Caco-2 (cell line): ENCODE measurements at regions of chr5 and their contacts with region 1.

Region 1: DNA sequence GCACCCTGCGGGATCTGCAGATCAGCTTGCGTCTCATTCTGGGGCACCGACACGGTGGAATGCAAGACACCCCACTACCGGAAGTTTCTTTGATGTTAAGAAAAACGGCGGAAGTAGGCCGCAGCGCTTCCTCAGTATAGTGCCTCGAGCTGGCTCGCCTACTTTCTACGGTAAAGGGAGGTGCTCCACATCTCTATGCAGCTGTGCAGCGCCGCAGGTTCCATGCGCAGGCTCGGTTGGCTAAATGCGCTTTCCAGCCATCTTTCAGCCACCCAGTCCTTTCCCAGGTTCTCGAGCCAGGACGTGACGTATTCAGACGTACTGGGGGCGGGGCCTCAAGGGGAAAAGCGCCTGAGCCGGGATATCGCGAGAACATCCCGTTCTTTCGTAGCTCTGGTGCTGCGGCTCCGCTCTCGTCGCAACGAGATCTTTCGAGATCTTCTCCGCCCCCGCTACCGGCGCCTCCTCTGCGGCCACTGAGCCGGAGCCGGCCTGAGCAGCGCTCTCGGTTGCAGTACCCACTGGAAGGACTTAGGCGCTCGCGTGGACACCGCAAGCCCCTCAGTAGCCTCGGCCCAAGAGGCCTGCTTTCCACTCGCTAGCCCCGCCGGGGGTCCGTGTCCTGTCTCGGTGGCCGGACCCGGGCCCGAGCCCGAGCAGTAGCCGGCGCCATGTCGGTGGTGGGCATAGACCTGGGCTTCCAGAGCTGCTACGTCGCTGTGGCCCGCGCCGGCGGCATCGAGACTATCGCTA is at the start of gene HSPA4:
- DNase-seq: peak; percentile 98 to 99
- H3K4me3 ChIP-seq: peak within 1 kb of the TSS; percentile 93
- H3K4me3 Mint-ChIP-seq: peak within 1 kb of the TSS; percentile 96
- H3K27ac Mint-ChIP-seq: peak within 1 kb of the TSS; percentile 100
- H3K4me1 ChIP-seq: peaks cover 24% of the 10 kb centered on the region
- H3K4me1 Mint-ChIP-seq: peaks cover 30% of the 10 kb centered on the region
- H3K27me3 ChIP-seq: no peaks in the 10 kb centered on the region
- H3K27me3 Mint-ChIP-seq: no peaks in the 10 kb centered on the region
- CTCF ChIP-seq: no peak
- total RNA-seq, gene HSPA4: 237 and 249 TPM in 2 replicates

Region 2: DNA sequence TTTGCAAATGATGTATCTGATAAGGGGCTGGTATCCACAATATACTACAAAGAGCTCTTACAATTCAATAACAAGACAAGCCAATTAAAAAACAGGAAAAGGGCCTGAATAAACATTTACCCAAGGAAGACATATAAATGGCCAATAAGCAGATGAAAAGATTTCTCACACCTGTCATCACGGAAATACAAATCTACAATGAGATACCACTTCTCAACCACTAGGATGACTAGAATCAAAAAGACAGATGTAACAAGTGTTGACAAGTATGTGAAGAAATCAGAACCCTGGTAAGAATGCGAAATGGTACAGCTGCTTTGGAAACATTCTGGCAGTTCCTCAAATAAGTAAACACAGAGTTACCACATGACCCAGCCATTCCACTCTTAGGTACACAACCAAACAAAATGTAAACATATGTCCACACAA is 145.9 kb before region 1 on chr5:
- CTCF ChIA-PET with region 1: no interaction called
- POLR2A ChIA-PET with region 1: no interaction called
- intact Hi-C with region 1: loop called (anchors 10 kb)
- DNase-seq: peak in 1 of 2 experiments; percentile 35
- H3K4me3 ChIP-seq: no peak overlapping the region
- H3K4me3 Mint-ChIP-seq: no peak overlapping the region
- H3K27ac Mint-ChIP-seq: no peak overlapping the region
- H3K4me1 ChIP-seq: no peaks in the 10 kb centered on the region
- H3K4me1 Mint-ChIP-seq: no peaks in the 10 kb centered on the region
- H3K27me3 ChIP-seq: no peaks in the 10 kb centered on the region
- H3K27me3 Mint-ChIP-seq: no peaks in the 10 kb centered on the region
- CTCF ChIP-seq: peak in 1 of 2 experiments; percentile 31

Region 3: GRCh38 chr5:132949136-132949535 is 102.6 kb before region 1 on chr5:
- CTCF ChIA-PET with region 1: no interaction called
- POLR2A ChIA-PET with region 1: interaction called, 10 read pairs
- intact Hi-C with region 1: no loop called
- DNase-seq: no peak
- H3K4me3 ChIP-seq: no peak overlapping the region
- H3K4me3 Mint-ChIP-seq: no peak overlapping the region
- H3K27ac Mint-ChIP-seq: no peak overlapping the region
- H3K4me1 ChIP-seq: peaks cover 25% of the 10 kb centered on the region
- H3K4me1 Mint-ChIP-seq: peaks cover 20% of the 10 kb centered on the region
- H3K27me3 ChIP-seq: no peaks in the 10 kb centered on the region
- H3K27me3 Mint-ChIP-seq: no peaks in the 10 kb centered on the region
- CTCF ChIP-seq: no peak

Region 4: GRCh38 chr5:132963175-132964104 is 88.3 kb before region 1 on chr5 and contains the start of gene AFF4:
- CTCF ChIA-PET with region 1: no interaction called
- POLR2A ChIA-PET with region 1: interaction called, 23 read pairs
- intact Hi-C with region 1: loop called (anchors 1 kb)
- DNase-seq: peak; percentile 97 to 99
- H3K4me3 ChIP-seq: peak within 1 kb of the TSS; percentile 88
- H3K4me3 Mint-ChIP-seq: peak within 1 kb of the TSS; percentile 96
- H3K27ac Mint-ChIP-seq: peak within 1 kb of the TSS; percentile 99
- H3K4me1 ChIP-seq: 0 out of 2 replicates have a peak, but pooled peaks cover 4% of the 10 kb centered on the region
- H3K4me1 Mint-ChIP-seq: no peaks in the 10 kb centered on the region
- H3K27me3 ChIP-seq: no peaks in the 10 kb centered on the region
- H3K27me3 Mint-ChIP-seq: no peaks in the 10 kb centered on the region
- CTCF ChIP-seq: no peak
- total RNA-seq, gene AFF4: 62.6 and 63.9 TPM in 2 replicates

Region 5: GRCh38 chr5:133025804-133026663 is 25.7 kb before region 1 on chr5 and contains the start of gene ZCCHC10:
- CTCF ChIA-PET with region 1: interaction called, 3 read pairs
- POLR2A ChIA-PET with region 1: interaction called, 9 read pairs
- intact Hi-C with region 1: loop called (anchors 1 kb)
- DNase-seq: peak; percentile 94 to 96
- H3K4me3 ChIP-seq: peak within 1 kb of the TSS; percentile 64
- H3K4me3 Mint-ChIP-seq: peak within 1 kb of the TSS; percentile 89
- H3K27ac Mint-ChIP-seq: peak within 1 kb of the TSS; percentile 91
- H3K4me1 ChIP-seq: peaks cover 16% of the 10 kb centered on the region
- H3K4me1 Mint-ChIP-seq: peaks cover 8% of the 10 kb centered on the region
- H3K27me3 ChIP-seq: no peaks in the 10 kb centered on the region
- H3K27me3 Mint-ChIP-seq: no peaks in the 10 kb centered on the region
- CTCF ChIP-seq: no peak
- total RNA-seq, gene ZCCHC10: 32.9 and 34.8 TPM in 2 replicates

Region 6: GRCh38 chr5:133075572-133076536 is 24.1 kb after region 1 on chr5:
- CTCF ChIA-PET with region 1: no interaction called
- POLR2A ChIA-PET with region 1: interaction called, 10 read pairs
- intact Hi-C with region 1: no loop called
- DNase-seq: peak in 1 of 2 experiments; percentile 18
- H3K4me3 ChIP-seq: no peak overlapping the region
- H3K4me3 Mint-ChIP-seq: no peak overlapping the region
- H3K27ac Mint-ChIP-seq: no peak overlapping the region
- H3K4me1 ChIP-seq: peaks cover 13% of the 10 kb centered on the region
- H3K4me1 Mint-ChIP-seq: peaks cover 14% of the 10 kb centered on the region
- H3K27me3 ChIP-seq: no peaks in the 10 kb centered on the region
- H3K27me3 Mint-ChIP-seq: no peaks in the 10 kb centered on the region
- CTCF ChIP-seq: no peak

Region 7: DNA sequence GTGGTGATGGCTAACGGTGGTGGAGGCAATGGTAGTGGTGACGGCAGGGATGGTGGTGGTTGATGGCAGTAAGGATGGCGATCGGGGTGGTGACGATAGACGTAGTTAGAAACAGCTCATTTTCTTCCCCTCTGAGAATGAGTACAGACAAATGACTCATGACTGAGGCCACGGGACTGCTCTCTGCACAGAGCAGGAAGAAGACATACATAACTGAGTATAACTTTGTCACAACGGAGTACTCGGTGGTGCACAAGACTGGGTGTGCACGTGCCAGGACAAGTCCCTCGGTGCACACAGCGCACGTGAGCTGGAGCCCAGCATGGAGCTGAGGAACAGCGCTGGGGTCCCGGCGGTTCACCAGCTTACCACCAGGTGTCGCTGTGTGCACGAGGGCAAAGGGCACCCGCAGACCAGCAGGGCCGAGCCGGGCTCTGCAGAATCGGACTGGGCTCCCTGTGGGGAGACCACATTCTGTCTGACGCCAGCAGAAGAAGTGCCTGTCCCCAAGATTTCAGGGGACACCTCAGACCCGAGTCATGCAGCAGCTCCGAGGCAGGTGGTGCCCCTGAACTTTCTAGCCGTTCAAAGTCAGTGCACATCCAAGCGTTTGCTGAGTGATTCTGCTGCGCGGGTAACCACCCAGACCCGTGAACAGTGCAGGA is 372.0 kb after region 1 on chr5:
- CTCF ChIA-PET with region 1: no interaction called
- POLR2A ChIA-PET with region 1: no interaction called
- intact Hi-C with region 1: no loop called
- DNase-seq: peak; percentile 73 to 87
- H3K4me3 ChIP-seq: no peak overlapping the region
- H3K4me3 Mint-ChIP-seq: peak overlapping the region; percentile 17
- H3K27ac Mint-ChIP-seq: no peak overlapping the region
- H3K4me1 ChIP-seq: 0 out of 2 replicates have a peak, but pooled peaks cover 6% of the 10 kb centered on the region
- H3K4me1 Mint-ChIP-seq: peaks cover 9% of the 10 kb centered on the region
- H3K27me3 ChIP-seq: no peaks in the 10 kb centered on the region
- H3K27me3 Mint-ChIP-seq: peaks cover 8% of the 10 kb centered on the region
- CTCF ChIP-seq: peak; percentile 91 to 94